ENCODE measurements at regions of chr1 and their contacts with region 1.

Region 1: DNA sequence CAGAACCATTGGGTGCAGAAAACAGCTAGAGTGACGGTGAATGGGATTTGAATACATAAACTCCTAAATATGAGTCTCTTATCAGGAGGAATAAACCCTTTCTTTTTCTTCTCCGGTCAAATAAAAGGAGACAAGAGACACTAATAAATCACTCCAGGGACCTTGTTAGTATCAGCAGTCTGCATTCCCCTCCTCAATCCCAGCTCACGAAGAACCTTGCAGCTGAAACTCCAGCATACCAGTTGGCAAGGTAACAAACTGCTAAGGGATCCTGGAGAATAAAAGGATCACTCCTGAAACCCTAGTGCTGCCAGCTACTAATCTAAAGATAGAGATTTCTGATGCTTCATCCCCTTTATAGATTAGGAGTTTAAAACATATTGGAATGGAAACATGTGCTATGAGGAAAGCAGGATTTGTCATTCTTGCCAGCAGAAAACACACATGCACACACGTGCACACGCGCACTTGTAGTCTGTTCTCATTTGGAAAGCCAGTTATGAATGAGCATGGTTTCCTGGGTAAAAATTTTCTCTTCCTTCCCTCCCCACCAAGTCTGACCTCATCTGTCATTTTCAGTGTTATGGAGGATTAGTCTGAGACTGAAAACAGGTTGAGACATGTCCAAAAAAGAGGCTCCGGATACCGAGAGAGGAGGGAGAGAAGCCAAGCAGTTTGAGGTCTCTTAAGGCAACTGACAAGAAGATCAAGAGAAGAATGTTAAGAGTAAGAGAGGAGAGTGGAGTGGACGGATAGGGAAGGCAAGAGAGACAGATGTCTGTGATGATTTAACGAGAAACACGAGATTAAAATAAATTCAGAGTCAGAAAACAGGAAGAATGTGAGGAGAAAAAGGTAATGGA is 10.9 kb downstream of the IER5 start:
- DNase-seq: peak; percentile 48
- CTCF ChIP-seq: no peak

Region 2: GRCh38 chr1:181044449-181044966 is 54.9 kb before region 1 on chr1:
- CTCF ChIA-PET with region 1: interaction called, 17 read pairs
- POLR2A ChIA-PET with region 1: interaction called, 15 read pairs
- DNase-seq: peak; percentile 75
- CTCF ChIP-seq: no peak

Region 3: GRCh38 chr1:181134543-181135362 is 35.4 kb after region 1 on chr1:
- CTCF ChIA-PET with region 1: interaction called, 107 read pairs
- POLR2A ChIA-PET with region 1: interaction called, 4 read pairs
- DNase-seq: peak; percentile 73
- CTCF ChIP-seq: no peak

Region 4: DNA sequence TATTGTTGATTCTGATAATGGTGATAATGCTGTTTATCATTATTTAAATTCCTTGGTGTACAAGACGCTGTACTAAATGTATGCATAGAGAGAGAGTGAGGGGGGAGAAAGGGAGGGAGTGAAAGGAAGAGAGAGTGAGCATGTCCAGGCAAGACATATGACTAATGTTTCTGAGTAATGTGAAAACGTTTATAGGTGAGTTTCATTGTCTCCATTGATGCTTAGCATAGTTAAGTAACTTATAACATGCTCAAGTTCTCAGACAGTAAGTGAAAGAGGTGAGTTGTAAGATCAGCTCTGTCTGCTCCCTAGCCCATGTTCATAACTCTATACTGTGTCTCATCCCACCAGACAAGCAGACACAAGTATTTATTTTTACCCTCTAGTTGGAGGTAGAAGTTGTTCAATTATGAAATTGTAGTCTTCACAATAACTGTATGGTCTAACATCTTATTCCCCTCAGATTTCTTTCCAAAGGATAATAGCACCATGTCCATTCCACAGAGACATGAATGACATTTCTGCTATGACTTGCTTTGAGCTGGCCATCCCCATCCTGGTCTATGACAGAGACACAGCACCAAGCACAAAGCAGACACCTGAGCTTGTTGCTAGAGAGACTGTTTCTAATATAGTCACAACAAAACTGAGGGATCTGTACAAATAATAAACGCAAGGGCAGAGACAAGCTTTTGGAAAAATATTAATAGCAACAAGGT is 669.0 kb after region 1 on chr1:
- CTCF ChIA-PET with region 1: no interaction called
- POLR2A ChIA-PET with region 1: interaction called, 13 read pairs
- DNase-seq: peak; percentile 28
- CTCF ChIP-seq: no peak

Measured in GM10248 (cell line).